Activated CD4-positive, alpha-beta T cell treated with anti-CD3 and anti-CD28 coated beads, Interleukin-2, amount 10 ng/mL, durations not matched to agents 24 days and 14 days (primary cell): ENCODE measurements at regions of chr2 and their contacts with region 1.

Region 1: DNA sequence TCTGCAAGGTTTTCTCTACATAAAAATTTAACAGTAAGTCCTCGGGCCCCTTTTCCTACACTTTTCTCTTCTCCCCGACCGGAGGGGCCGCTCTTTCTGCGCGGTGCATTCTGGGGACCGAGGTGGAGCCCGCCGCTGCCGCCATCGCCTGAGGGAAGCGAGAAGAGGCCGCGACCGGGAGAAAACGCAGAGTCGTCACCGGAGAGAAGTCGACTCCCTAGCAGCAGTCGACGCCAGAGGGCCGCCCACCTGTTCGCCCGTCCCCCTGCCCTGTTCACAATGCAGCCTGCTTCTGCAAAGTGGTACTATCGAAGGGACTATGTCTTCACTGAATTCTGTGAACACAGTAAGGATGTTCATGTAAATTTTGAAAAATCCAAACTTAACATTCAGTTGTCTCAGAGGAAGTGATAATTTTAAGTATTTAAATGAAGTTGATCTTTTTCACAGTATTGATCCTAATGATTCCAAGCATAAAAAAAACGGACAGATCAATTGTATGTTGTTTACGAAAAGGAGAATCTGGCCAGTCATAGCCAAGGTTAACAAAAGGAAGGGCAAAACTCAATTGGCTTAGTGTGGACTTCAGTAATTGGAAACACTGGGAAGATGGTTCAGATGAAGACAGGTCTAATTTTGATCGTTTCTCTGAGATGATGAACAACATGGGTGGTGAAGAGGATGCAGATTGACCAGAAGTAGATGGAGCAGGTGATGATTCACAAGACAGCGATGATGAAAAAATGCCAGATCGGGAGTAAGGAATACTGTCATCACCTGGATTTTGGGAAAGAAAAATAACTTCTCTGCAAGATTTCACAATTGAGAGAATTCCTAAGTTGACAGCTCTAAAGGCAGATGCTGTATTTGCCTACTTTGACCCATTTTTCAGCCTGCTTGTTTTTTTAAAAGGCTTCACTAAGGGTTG is 55.8 kb downstream of the ASXL2 start:
- DNase-seq: peak; percentile 88
- H3K4me3 Mint-ChIP-seq: peak overlapping the region; percentile 82
- H3K27ac Mint-ChIP-seq: peak overlapping the region; percentile 79
- H3K4me1 Mint-ChIP-seq: peaks cover 59% of the 10 kb centered on the region
- H3K27me3 Mint-ChIP-seq: no peaks in the 10 kb centered on the region

Region 2: DNA sequence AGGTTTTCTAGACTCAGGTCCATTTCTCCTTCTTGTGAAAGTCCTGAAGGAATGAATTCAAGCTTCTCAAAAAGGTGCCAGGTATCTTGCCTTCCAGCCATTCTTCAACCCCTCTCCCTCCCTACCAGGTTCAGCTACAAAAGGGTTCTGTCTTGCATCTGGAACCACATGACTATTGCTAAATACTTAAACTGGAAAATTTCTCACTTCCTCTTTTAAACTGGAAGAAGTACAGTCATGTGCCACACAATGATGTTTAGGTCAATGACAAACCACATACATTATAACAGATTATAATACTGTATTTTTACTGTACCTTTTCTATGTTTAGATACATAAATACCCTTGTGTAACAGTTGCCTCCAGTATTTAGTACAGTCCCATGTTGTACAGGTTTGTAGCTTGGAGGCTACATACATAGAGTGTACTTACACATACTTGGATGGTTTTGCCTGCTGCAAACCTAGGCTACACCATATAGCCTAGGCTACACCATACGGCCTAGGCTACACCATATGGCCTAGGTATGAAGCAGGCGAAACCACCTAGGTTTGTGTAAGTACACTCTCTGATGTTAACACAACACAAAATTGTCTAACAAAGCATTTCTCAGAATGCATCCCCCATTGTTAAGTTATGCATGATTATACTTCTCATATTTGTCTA is 338.7 kb before region 1 on chr2:
- intact Hi-C with region 1: no loop called
- DNase-seq: no peak
- H3K4me3 Mint-ChIP-seq: no peak overlapping the region
- H3K27ac Mint-ChIP-seq: no peak overlapping the region
- H3K4me1 Mint-ChIP-seq: peaks cover 8% of the 10 kb centered on the region
- H3K27me3 Mint-ChIP-seq: no peaks in the 10 kb centered on the region

Region 3: GRCh38 chr2:25794544-25795276 is 27.7 kb before region 1 on chr2:
- intact Hi-C with region 1: loop called (anchors 1 kb)
- DNase-seq: no peak
- H3K4me3 Mint-ChIP-seq: peak overlapping the region; percentile 80
- H3K27ac Mint-ChIP-seq: peak overlapping the region; percentile 86
- H3K4me1 Mint-ChIP-seq: peaks cover 69% of the 10 kb centered on the region
- H3K27me3 Mint-ChIP-seq: no peaks in the 10 kb centered on the region

Region 4: DNA sequence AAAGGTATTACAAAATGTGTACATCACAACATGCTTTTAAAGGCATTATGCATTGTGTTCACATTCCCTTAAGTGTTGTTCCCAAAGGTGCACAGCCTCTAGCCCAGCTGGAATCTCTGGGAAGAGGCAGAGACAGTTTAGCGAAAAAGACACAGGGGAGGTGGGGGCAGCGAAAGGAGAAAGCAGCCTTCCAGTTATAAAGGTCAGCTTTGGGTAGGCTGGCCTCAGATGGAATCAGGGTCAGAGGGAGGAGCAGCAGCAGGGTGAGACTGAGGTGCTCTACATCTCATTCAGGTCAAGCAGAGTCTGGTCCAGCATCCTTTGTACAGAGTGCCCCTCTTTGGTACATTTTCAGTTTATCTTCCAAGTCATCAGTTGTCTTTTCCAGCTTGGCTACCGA is 12.8 kb before region 1 on chr2:
- intact Hi-C with region 1: loop called (anchors 1 kb)
- DNase-seq: no peak
- H3K4me3 Mint-ChIP-seq: no peak overlapping the region
- H3K27ac Mint-ChIP-seq: no peak overlapping the region
- H3K4me1 Mint-ChIP-seq: peaks cover 46% of the 10 kb centered on the region
- H3K27me3 Mint-ChIP-seq: no peaks in the 10 kb centered on the region

Region 5: DNA sequence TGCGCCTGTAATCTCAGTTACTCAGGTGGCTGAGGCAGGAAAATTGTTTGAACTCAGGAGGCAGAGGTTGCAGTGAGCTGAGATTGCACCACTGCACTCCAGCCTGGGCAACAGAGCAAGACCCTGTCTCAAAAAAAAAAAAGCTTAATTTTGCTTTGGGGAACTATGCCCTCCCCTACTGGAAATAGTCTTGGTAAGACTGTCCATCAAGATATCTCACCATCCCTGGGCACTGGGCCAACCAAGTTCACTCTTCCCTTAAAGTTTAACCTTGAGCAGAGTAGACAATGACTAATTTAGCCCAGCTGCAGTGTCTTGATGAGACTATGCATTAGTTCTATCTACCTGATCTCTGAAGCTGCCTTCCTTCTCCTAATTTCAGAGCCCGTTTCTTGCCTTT is 11.1 kb after region 1 on chr2:
- intact Hi-C with region 1: loop called (anchors 1 kb)
- DNase-seq: no peak
- H3K4me3 Mint-ChIP-seq: no peak overlapping the region
- H3K27ac Mint-ChIP-seq: peak overlapping the region; percentile 45
- H3K4me1 Mint-ChIP-seq: peaks cover 38% of the 10 kb centered on the region
- H3K27me3 Mint-ChIP-seq: no peaks in the 10 kb centered on the region